Naive thymus-derived CD4-positive, alpha-beta T cell (primary cell): ENCODE measurements at regions of chr3 and their contacts with region 1.

Region 1: GRCh38 chr3:111071257-111072015 is at the start of gene NECTIN3:
- DNase-seq: peak; percentile 59 to 89 (median 80)
- ATAC-seq: peak; percentile 96
- H3K4me3 ChIP-seq: peak within 1 kb of the TSS; percentile 76
- H3K4me3 Mint-ChIP-seq: peak within 1 kb of the TSS; percentile 90 to 98 (median 94)
- H3K27ac ChIP-seq: peak within 1 kb of the TSS; percentile 52
- H3K27ac Mint-ChIP-seq: peak within 1 kb of the TSS; percentile 63 to 91 (median 87)
- H3K4me1 ChIP-seq: peaks cover 9% of the 10 kb centered on the region in 2 donors
- H3K4me1 Mint-ChIP-seq: peaks cover 24 to 34% (median 26%) of the 10 kb centered on the region in 7 donors
- H3K27me3 ChIP-seq: peaks cover 0 to 6% of the 10 kb centered on the region in 2 donors
- H3K27me3 Mint-ChIP-seq: peaks cover 29 to 64% (median 36%) of the 10 kb centered on the region in 5 donors
- total RNA-seq, gene NECTIN3: 2.4 to 7.2 (median 4.6) TPM

Region 2: GRCh38 chr3:111238885-111239284 is 167.4 kb after region 1 on chr3:
- CTCF ChIA-PET with region 1: no interaction called
- POLR2A ChIA-PET with region 1: no interaction called
- intact Hi-C with region 1: loop called in 1 of 2 experiments (anchors 2 kb)
- DNase-seq: peak in 6 of 9 donors; percentile 16 to 47 (median 34)
- ATAC-seq: peak; percentile 75
- H3K4me3 ChIP-seq: no peak overlapping the region
- H3K4me3 Mint-ChIP-seq: peak overlapping the region in 8 of 10 donors; percentile 0 to 76 (median 54)
- H3K27ac ChIP-seq: peak overlapping the region; percentile 4
- H3K27ac Mint-ChIP-seq: peak overlapping the region; percentile 0 to 90 (median 64)
- H3K4me1 ChIP-seq: peaks cover 6 to 15% of the 10 kb centered on the region in 2 donors
- H3K4me1 Mint-ChIP-seq: peaks cover 11 to 47% (median 35%) of the 10 kb centered on the region in 7 donors
- H3K27me3 ChIP-seq: no peaks in the 10 kb centered on the region
- H3K27me3 Mint-ChIP-seq: no peaks in the 10 kb centered on the region

Region 3: DNA sequence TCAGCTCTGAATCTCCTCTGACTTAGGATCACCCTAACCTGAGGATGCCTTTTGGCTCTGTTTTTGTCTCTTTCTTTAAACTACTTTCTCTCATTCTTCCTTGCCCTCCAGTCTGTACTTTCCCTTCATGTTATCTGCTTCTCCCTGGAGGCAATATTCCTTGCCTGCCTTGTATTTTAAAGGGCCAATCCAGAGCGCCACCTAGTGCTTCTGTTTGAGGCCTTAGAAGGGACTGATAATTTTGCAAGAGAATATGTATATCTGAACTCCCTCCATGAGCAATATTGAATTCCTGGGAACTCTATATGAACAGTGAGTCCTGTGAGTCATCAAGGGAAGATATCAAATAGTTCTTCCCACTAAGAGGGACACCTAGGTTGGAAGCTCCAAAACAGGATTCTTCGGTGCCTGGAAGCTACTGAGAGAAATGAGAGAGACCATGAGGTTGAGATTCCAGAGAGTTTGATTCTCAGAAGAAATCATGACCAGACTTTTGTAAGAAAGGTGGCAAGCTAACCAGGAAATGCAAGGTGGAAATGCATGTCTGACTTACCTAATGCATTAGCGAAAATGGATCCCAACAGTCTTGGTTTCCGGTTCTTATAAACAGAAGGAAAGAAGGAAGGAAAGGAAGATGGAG is 266.7 kb after region 1 on chr3:
- CTCF ChIA-PET with region 1: interaction called, 4 read pairs
- POLR2A ChIA-PET with region 1: no interaction called
- intact Hi-C with region 1: loop called in 1 of 2 experiments (anchors 2 kb)
- DNase-seq: peak in 5 of 9 donors; percentile 22 to 43 (median 23)
- ATAC-seq: no peak
- H3K4me3 ChIP-seq: no peak overlapping the region
- H3K4me3 Mint-ChIP-seq: no peak overlapping the region
- H3K27ac ChIP-seq: no peak overlapping the region
- H3K27ac Mint-ChIP-seq: peak overlapping the region in 2 of 9 donors; percentile 3 to 4
- H3K4me1 ChIP-seq: no peaks in the 10 kb centered on the region
- H3K4me1 Mint-ChIP-seq: peaks cover 2 to 31% (median 12%) of the 10 kb centered on the region in 7 donors
- H3K27me3 ChIP-seq: no peaks in the 10 kb centered on the region
- H3K27me3 Mint-ChIP-seq: no peaks in the 10 kb centered on the region

Region 4: DNA sequence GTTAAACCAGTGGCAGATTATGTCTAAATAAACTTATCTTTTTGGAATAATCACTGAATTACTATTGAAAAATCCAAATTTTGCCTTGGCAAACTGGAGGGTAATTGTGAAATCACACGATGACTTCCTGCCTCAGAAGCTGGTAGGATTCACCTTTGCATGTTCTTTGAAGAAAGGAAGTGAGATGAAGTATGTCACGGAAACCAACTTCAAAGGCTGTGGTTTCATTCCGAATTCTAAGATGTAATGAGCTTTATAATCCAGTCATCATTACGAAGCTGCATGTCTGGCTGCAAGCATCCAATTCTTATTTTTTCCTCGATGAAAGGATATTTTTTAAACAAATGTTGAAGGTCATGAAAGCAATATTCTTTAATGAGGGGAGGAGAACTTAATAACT is 538.8 kb after region 1 on chr3:
- CTCF ChIA-PET with region 1: no interaction called
- POLR2A ChIA-PET with region 1: no interaction called
- intact Hi-C with region 1: loop called (anchors 1 to 2 kb)
- DNase-seq: peak in 7 of 9 donors; percentile 79 to 91 (median 89)
- ATAC-seq: peak; percentile 94
- H3K4me3 ChIP-seq: peak overlapping the region; percentile 2
- H3K4me3 Mint-ChIP-seq: peak overlapping the region; percentile 48 to 84 (median 74)
- H3K27ac ChIP-seq: peak overlapping the region; percentile 47
- H3K27ac Mint-ChIP-seq: peak overlapping the region; percentile 41 to 96 (median 90)
- H3K4me1 ChIP-seq: peaks cover 27 to 38% of the 10 kb centered on the region in 2 donors
- H3K4me1 Mint-ChIP-seq: peaks cover 32 to 90% (median 61%) of the 10 kb centered on the region in 7 donors
- H3K27me3 ChIP-seq: no peaks in the 10 kb centered on the region
- H3K27me3 Mint-ChIP-seq: no peaks in the 10 kb centered on the region

Region 5: GRCh38 chr3:112086076-112086854 is 1014.8 kb after region 1 on chr3 and contains the start of gene C3orf52:
- CTCF ChIA-PET with region 1: no interaction called
- POLR2A ChIA-PET with region 1: no interaction called
- intact Hi-C with region 1: loop called in 1 of 2 experiments (anchors 10 kb)
- DNase-seq: peak; percentile 37 to 84 (median 49)
- ATAC-seq: peak; percentile 89
- H3K4me3 ChIP-seq: peak within 1 kb of the TSS; percentile 64
- H3K4me3 Mint-ChIP-seq: peak within 1 kb of the TSS; percentile 81 to 91 (median 86)
- H3K27ac ChIP-seq: peak within 1 kb of the TSS; percentile 50
- H3K27ac Mint-ChIP-seq: peak within 1 kb of the TSS; percentile 25 to 89 (median 77)
- H3K4me1 ChIP-seq: peaks cover 8 to 10% of the 10 kb centered on the region in 2 donors
- H3K4me1 Mint-ChIP-seq: peaks cover 32 to 66% (median 46%) of the 10 kb centered on the region in 7 donors
- H3K27me3 ChIP-seq: no peaks in the 10 kb centered on the region
- H3K27me3 Mint-ChIP-seq: peaks cover 0 to 17% (median 3%) of the 10 kb centered on the region in 5 donors
- total RNA-seq, gene C3orf52: 1.2 to 12.3 (median 1.9) TPM